Prostate gland (tissue), 2 donors: ENCODE measurements at regions of chr15 and their contacts with region 1.

Region 1: GRCh38 chr15:99169769-99170311 is 65.0 kb downstream of the SYNM start:
- DNase-seq: peak; percentile 39
- H3K4me3 ChIP-seq: no peak overlapping the region
- H3K27ac ChIP-seq: peak overlapping the region; percentile 76 to 81
- H3K4me1 ChIP-seq: no peaks in the 10 kb centered on the region
- H3K27me3 ChIP-seq: no peaks in the 10 kb centered on the region
- CTCF ChIP-seq: no peak
- POLR2A ChIP-seq: no peak

Region 2: DNA sequence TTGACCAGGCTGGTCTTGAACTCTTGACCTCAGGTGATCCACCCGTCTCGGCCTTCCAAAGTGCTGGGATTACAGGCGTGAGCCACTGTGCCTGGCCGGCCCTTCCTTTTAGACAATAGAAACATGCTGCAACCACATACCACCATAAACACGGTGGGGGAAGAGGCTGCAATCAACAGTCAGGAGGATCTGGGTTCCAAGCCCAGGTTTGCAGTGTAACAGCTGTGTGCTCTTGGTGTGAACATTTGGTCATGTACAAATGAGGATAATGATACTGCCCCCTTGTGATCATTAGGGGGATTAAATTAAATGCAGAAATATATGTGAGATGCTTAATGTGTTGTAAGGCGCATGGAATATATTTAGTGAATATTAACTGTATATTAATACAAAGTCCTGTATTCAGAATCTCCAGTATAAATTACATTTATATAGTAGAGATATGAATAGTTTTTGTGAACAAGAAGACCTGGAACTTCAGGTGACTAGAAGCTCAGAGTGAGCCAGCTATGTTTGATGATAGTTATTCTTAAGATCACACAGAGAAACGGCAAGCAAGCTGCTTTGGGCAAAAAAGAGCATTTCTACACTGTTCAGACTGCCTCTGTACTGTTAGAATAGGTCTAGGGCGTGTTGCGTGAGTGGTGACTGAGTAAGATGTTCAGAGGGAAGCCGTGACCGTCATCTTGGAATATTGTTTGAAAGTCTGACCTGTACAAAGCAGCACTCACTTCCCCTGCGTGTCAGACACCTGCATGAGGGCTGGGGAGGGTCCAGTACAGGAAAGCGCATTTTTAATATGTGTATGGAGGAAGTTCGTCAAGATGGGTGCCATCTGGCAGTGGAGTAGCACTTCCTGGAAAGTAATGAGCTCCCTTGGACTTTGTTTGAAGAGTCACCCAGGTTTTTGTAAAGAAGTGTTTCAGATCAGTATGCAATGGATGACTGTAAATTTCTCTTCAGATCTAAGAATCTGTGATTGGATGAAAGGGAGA is 288.0 kb before region 1 on chr15:
- intact Hi-C with region 1: no loop called
- DNase-seq: no peak
- H3K4me3 ChIP-seq: no peak overlapping the region
- H3K27ac ChIP-seq: no peak overlapping the region
- H3K4me1 ChIP-seq: no peaks in the 10 kb centered on the region
- H3K27me3 ChIP-seq: no peaks in the 10 kb centered on the region
- CTCF ChIP-seq: peak; percentile 29 to 66 (median 55)
- POLR2A ChIP-seq: no peak

Region 3: GRCh38 chr15:99213187-99213811 is 43.5 kb after region 1 on chr15:
- intact Hi-C with region 1: loop called (anchors 2 kb)
- DNase-seq: peak; percentile 73
- H3K4me3 ChIP-seq: no peak overlapping the region
- H3K27ac ChIP-seq: peak overlapping the region; percentile 37 to 44
- H3K4me1 ChIP-seq: no peaks in the 10 kb centered on the region
- H3K27me3 ChIP-seq: no peaks in the 10 kb centered on the region
- CTCF ChIP-seq: peak; percentile 31 to 94 (median 85)
- POLR2A ChIP-seq: no peak